Esophagus muscularis mucosa (tissue), 4 donors: ENCODE measurements at regions of chr1 and their contacts with region 1.

Region 1: GRCh38 chr1:192609110-192610079 is 26.6 kb upstream of the RGS13 start:
- DNase-seq: no peak
- H3K4me3 ChIP-seq: no peak overlapping the region
- H3K27ac ChIP-seq: peak overlapping the region in 3 of 4 donors; percentile 33 to 47 (median 44)
- H3K4me1 ChIP-seq: peaks cover 0 to 26% (median 13%) of the 10 kb centered on the region in 4 donors
- H3K27me3 ChIP-seq: no peaks in the 10 kb centered on the region
- CTCF ChIP-seq: peak in 1 of 3 experiments; percentile 5
- EP300 ChIP-seq: no peak
- POLR2A ChIP-seq: no peak

Region 2: DNA sequence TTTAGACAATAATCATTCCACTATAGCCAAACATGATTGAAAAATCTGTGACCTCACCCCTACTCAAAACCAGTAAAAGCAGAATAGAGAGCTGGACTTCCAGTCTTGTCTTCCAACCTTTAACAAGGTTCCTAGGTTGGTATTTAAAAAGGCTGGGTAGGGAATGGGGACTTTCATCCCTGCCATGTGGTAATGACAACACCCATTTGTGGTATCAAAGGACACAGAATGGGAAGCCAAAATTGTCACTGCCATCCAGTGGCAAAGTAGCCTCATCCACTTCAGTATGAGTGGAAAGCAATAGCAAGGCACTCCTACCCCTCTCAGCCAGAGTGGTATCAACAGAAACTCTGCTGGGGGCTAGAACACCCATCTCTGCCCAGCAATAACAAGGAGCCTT is 415.8 kb after region 1 on chr1:
- intact Hi-C with region 1: loop called (anchors 5 kb)
- DNase-seq: no peak
- H3K4me3 ChIP-seq: no peak overlapping the region
- H3K27ac ChIP-seq: no peak overlapping the region
- H3K4me1 ChIP-seq: peaks cover 0 to under 1% (median 0%) of the 10 kb centered on the region in 4 donors
- H3K27me3 ChIP-seq: no peaks in the 10 kb centered on the region
- CTCF ChIP-seq: no peak
- EP300 ChIP-seq: no peak
- POLR2A ChIP-seq: no peak

Region 3: GRCh38 chr1:193111641-193112090 is 502.3 kb after region 1 on chr1:
- intact Hi-C with region 1: loop called (anchors 10 kb)
- DNase-seq: no peak
- H3K4me3 ChIP-seq: no peak overlapping the region
- H3K27ac ChIP-seq: peak overlapping the region; percentile 30 to 57 (median 54)
- H3K4me1 ChIP-seq: peaks cover 20 to 39% (median 30%) of the 10 kb centered on the region in 4 donors
- H3K27me3 ChIP-seq: no peaks in the 10 kb centered on the region
- CTCF ChIP-seq: no peak
- EP300 ChIP-seq: no peak
- POLR2A ChIP-seq: no peak